Activated CD4-positive, alpha-beta memory T cell treated with anti-CD3 and anti-CD28 coated beads for 36 hours (primary cell): ENCODE measurements at regions of chr12 and their contacts with region 1.

Region 1: DNA sequence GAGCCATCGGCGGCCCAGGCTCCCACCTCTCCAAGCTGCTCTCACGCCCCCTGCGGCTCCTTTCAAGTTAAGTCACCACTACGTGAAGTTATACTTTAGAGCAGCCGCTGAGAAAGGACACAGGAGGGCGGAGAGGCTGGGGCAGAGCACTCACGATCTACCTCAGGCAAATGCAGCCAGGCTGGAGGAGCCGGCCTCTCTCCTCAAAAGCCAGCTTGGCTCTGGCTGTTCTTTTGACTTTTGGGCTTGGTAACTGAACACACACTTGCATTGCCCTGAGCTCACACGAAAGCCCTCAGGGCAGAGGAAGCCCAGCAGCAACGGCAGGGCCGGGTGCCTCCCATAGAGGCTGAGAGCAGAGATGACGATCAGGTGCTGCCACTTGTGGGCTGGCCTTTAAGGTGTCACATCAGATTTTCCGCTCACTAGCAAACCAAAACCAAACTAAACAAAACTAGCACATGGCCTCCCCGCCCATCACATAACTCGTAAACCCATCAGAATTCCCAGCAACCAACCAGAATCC is 75.2 kb downstream of the PITPNM2 start:
- DNase-seq: peak; percentile 88
- H3K4me3 Mint-ChIP-seq: peak overlapping the region; percentile 68
- H3K27ac Mint-ChIP-seq: peak overlapping the region; percentile 95
- H3K4me1 Mint-ChIP-seq: peaks cover 41% of the 10 kb centered on the region
- H3K27me3 Mint-ChIP-seq: no peaks in the 10 kb centered on the region

Region 2: GRCh38 chr12:122888232-122888867 is 187.4 kb before region 1 on chr12:
- CTCF ChIA-PET with region 1: no interaction called
- POLR2A ChIA-PET with region 1: no interaction called
- intact Hi-C with region 1: loop called (anchors 5 kb)
- DNase-seq: peak; percentile 65
- H3K4me3 Mint-ChIP-seq: peak overlapping the region; percentile 70
- H3K27ac Mint-ChIP-seq: peak overlapping the region; percentile 88
- H3K4me1 Mint-ChIP-seq: peaks cover 77% of the 10 kb centered on the region
- H3K27me3 Mint-ChIP-seq: peaks cover 5% of the 10 kb centered on the region

Region 3: DNA sequence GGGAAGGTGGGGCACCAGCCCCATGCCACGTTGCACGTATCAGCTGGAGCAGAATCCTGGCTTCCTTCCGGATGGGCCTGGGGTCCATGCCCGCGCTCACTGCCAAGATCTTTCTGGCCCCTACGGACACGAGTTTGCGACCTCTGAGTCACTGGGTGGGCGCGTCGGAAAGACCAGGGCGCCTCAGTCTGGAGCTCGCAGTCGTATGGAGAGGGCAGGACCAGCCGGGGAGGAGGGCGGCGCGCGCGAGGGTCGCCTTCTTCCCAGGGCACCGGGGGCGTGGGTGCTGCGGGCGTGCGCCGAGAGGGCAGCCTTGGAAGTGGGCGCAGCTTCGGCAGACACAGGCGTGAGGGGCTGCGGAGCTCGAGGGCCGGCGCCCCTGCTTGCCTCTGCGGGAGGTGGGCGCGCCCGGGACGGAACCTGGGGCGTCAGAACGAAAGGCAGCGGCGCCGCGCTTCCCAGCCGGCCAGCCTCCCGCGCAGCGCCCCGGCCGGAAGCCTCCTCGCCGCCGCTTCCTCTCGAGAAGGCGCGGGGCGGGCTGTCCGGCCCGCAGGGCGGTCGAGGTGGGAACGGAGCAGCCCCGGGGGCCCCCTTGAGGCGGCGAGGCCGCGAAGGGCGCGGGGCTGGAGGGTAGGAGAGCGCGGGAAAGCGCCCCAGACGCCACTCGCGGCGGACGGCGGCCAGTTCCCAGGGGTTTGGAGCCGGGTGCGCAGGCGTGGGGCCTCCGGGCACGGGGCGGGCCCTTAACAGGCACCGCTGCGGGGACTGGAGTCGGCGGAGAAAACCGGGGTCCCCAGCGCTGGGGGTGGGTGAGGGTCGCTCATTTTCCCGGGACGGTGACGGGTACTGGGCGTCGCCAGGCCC is 95.3 kb before region 1 on chr12 and contains the start of gene ARL6IP4:
- CTCF ChIA-PET with region 1: interaction called, 3 read pairs
- POLR2A ChIA-PET with region 1: interaction called, 6 read pairs
- intact Hi-C with region 1: loop called (anchors 1 kb)
- DNase-seq: peak; percentile 72
- H3K4me3 Mint-ChIP-seq: peak within 1 kb of the TSS; percentile 89
- H3K27ac Mint-ChIP-seq: peak within 1 kb of the TSS; percentile 82
- H3K4me1 Mint-ChIP-seq: peaks cover 42% of the 10 kb centered on the region
- H3K27me3 Mint-ChIP-seq: no peaks in the 10 kb centered on the region
- total RNA-seq, gene ARL6IP4: 180 to 188 TPM

Region 4: GRCh38 chr12:123043536-123044001 is 32.1 kb before region 1 on chr12:
- CTCF ChIA-PET with region 1: interaction called, 30 read pairs
- POLR2A ChIA-PET with region 1: interaction called, 6 read pairs
- intact Hi-C with region 1: loop called (anchors 1 kb)
- DNase-seq: peak; percentile 85
- H3K4me3 Mint-ChIP-seq: no peak overlapping the region
- H3K27ac Mint-ChIP-seq: no peak overlapping the region
- H3K4me1 Mint-ChIP-seq: peaks cover 21% of the 10 kb centered on the region
- H3K27me3 Mint-ChIP-seq: no peaks in the 10 kb centered on the region

Region 5: DNA sequence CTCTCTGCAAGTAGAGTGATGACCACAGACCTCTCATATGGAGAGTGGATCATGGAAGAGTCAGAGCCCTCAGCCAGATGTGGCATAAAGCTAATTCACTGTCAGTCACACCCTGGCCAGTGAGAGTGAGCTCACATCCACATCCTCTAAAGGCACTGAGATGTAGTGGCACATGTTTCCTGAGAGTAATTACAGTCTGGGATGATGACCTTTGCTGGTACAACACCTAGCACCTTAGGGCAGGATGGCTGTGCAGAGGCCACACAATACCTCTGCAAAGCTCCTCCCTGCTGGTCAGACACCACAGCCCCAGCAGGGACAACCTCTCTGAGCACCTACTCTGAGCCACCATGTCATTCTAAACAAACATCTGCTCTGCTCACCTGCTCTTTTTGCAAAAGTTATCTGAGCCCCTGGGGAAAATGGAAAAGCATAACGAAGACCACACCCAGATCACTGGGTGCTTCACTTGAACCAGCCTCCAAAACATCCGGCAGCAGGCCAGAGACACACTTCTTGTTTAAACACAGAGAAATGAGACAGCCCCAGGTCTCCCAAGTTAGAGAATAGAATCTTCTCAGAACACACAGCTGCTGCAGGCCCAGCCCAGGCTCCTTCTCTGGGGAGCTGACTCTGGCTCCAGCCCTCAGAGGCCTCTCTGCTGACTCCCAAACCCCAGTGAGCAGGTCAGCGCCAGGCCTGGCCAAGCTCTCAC is 44.9 kb after region 1 on chr12:
- CTCF ChIA-PET with region 1: no interaction called
- POLR2A ChIA-PET with region 1: interaction called, 10 read pairs
- intact Hi-C with region 1: loop called (anchors 1 kb)
- DNase-seq: peak; percentile 60
- H3K4me3 Mint-ChIP-seq: no peak overlapping the region
- H3K27ac Mint-ChIP-seq: peak overlapping the region; percentile 65
- H3K4me1 Mint-ChIP-seq: peaks cover 42% of the 10 kb centered on the region
- H3K27me3 Mint-ChIP-seq: no peaks in the 10 kb centered on the region

Region 6: DNA sequence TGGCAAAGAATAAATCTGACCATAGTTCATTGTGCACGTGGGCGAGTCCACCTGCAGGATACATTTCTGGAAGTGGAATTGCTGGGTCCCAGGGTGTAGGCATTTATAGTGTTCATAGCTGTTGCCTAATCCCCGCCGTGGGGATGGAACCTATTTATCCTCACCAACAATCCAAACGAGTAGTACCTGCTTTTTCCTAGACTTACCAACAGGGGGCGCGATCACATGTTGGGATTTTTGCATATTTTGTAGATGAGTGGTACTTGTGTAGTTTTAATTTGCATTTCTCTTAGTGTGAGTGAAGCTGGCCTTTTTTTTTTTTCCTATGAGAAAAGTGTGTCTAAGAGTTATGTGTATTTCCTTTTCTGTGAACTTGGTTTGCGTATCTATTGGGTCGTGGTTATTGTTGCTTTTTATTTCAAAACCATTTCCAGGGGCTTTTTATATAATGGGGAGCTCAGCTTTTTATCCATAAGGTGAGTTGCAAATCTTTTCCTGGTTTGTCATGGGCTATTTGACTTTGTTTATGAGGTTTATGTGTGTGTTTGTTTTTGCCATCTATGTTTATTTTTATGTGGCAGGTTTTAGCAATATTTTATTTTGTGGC is 829.7 kb after region 1 on chr12:
- CTCF ChIA-PET with region 1: no interaction called
- POLR2A ChIA-PET with region 1: no interaction called
- intact Hi-C with region 1: no loop called
- DNase-seq: peak; percentile 79
- H3K4me3 Mint-ChIP-seq: no peak overlapping the region
- H3K27ac Mint-ChIP-seq: peak overlapping the region; percentile 15
- H3K4me1 Mint-ChIP-seq: peaks cover 10% of the 10 kb centered on the region
- H3K27me3 Mint-ChIP-seq: peaks cover 7% of the 10 kb centered on the region